SK-N-SH (cell line): ENCODE measurements at regions of chr6 and their contacts with region 1.

Region 1: DNA sequence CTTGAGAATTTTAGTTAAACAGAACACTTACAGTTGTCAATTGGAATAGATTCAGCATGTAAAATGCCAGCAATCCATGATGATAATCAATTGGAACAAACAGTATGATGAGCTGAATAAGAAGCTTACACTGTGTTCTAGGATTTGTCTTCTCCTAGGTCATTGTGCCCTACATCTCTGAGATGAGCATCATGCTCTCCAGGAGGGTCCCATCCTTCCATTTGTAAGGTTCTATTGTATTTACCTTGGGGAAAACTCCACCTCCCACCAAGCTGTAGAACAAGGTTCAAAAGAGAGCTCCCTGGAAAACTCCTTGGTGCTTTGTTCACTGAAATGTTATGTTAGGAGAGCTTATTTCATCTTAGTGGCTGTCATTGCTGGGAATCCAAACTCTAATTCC is 60.8 kb downstream of the OR2B2 start:
- DNase-seq: no peak
- H3K4me3 ChIP-seq: no peak overlapping the region
- H3K27ac ChIP-seq: no peak overlapping the region
- H3K4me1 ChIP-seq: peaks cover 0 to 9% of the 10 kb centered on the region in 2 experiments; a peak in 1 of 4 replicates
- H3K27me3 ChIP-seq: no peaks in the 10 kb centered on the region
- CTCF ChIP-seq: no peak
- EP300 ChIP-seq: no peak
- RAD21 ChIP-seq: no peak

Region 2: DNA sequence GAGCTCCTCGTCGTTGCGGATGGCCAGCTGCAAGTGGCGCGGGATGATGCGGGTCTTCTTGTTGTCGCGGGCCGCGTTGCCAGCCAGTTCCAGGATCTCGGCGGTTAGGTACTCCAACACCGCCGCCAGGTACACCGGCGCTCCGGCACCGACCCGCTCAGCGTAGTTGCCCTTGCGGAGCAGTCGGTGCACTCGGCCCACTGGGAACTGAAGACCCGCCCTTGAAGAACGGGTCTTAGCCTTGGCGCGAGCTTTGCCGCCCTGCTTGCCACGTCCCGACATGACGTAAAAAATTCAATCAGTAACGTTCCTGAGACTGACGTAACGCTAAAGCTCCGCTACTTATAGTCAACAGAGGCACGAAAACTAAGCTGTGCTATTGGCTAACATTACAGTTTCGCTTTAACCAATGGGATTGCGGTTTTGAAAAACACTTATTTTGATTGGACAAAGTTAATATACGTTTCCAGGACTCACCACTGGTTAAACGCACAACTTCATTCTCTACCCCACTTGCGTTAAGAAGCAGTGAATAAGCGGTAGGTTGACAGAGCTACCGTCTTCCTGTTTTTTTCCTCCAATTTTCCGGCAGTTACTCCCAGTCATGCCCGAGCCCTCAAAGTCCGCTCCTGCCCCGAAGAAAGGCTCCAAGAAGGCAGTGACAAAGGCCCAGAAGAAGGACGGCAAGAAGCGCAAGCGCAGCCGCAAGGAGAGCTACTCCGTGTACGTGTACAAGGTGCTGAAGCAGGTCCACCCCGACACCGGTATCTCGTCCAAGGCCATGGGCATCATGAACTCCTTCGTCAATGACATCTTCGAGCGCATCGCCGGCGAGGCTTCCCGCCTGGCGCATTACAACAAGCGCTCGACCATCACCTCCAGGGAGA is 13.1 kb before region 1 on chr6:
- CTCF ChIA-PET with region 1: interaction called, 10 read pairs
- POLR2A ChIA-PET with region 1: interaction called, 30 read pairs
- DNase-seq: peak; percentile 84
- H3K4me3 ChIP-seq: peak overlapping the region; percentile 83 to 84
- H3K27ac ChIP-seq: peak overlapping the region; percentile 97 to 99
- H3K4me1 ChIP-seq: peaks cover 0 to 11% of the 10 kb centered on the region in 2 experiments; a peak in 2 of 4 replicates
- H3K27me3 ChIP-seq: no peaks in the 10 kb centered on the region
- CTCF ChIP-seq: no peak
- EP300 ChIP-seq: peak in 1 of 2 experiments; percentile 26; a peak in 1 of 4 replicates
- RAD21 ChIP-seq: no peak

Region 3: DNA sequence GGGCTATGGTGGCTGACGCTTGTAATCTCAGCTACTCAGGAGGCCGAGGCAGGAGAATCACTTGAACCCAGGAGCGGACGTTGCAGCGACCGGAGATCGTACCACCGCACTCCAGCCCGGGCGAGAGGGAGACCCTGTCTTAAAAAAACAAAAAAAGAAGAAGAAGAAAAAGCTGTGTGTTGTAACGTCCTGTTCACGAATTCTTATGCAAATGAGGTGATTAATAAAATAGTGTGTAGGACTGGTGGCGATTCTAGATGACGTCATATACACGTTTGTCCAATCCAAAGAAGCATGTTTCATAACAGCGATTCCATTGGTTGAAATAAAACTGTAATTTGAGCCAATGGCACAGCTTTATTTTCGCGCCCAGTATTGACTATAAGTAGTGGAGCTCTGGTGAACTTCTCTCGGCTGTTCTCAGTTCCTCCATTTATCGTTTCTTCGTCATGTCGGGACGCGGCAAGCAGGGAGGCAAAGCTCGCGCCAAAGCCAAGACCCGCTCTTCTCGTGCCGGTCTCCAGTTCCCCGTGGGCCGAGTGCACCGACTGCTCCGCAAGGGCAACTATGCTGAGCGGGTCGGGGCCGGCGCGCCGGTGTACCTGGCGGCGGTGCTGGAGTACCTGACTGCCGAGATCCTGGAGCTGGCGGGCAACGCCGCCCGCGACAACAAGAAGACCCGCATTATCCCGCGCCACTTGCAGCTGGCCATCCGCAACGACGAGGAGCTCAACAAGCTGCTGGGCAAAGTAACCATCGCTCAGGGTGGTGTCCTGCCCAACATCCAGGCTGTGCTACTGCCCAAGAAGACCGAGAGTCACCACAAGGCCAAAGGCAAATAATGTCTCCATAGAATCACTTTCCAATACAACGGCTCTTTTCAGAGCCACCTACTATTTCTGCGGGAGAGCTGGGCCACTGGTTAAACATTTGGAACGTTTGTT is 13.7 kb after region 1 on chr6:
- CTCF ChIA-PET with region 1: interaction called, 5 read pairs
- POLR2A ChIA-PET with region 1: interaction called, 17 read pairs
- DNase-seq: peak; percentile 85
- H3K4me3 ChIP-seq: peak overlapping the region; percentile 47 to 80
- H3K27ac ChIP-seq: peak overlapping the region; percentile 80 to 97
- H3K4me1 ChIP-seq: peaks cover 0 to 20% of the 10 kb centered on the region in 2 experiments; a peak in 2 of 4 replicates
- H3K27me3 ChIP-seq: no peaks in the 10 kb centered on the region
- CTCF ChIP-seq: no peak
- EP300 ChIP-seq: no peak; a peak in 1 of 4 replicates
- RAD21 ChIP-seq: no peak

Region 4: DNA sequence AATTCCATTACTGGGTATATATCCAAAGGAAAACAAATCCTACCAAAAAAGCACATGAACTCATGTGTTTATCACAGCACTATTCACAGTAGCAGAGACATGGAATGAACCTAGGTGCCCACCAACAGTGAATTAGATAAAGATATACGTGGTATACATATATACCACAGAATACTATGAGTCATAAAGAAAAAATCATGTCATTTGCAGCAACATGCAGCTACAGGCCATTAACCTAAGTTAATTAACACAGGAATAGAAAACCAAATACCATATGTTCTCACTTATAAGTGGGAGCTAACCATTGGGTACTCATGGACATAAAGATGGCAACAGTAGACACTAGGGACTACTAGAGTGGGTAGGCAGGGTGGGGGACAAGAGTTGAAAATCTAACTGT is 56.6 kb after region 1 on chr6:
- CTCF ChIA-PET with region 1: no interaction called
- POLR2A ChIA-PET with region 1: no interaction called
- DNase-seq: no peak
- H3K4me3 ChIP-seq: no peak overlapping the region
- H3K27ac ChIP-seq: no peak overlapping the region
- H3K4me1 ChIP-seq: no peaks in the 10 kb centered on the region
- H3K27me3 ChIP-seq: no peaks in the 10 kb centered on the region
- CTCF ChIP-seq: no peak
- EP300 ChIP-seq: no peak
- RAD21 ChIP-seq: no peak